PC-3 (cell line): ENCODE measurements at regions of chr4 and their contacts with region 1.

Region 1: GRCh38 chr4:24781999-24782745 is 13.2 kb upstream of the SOD3 start:
- DNase-seq: peak; percentile 72
- ATAC-seq: peak; percentile 82
- H3K4me3 ChIP-seq: no peak overlapping the region
- H3K27ac ChIP-seq: peak overlapping the region; percentile 78
- H3K4me1 ChIP-seq: peaks cover 26% of the 10 kb centered on the region
- H3K27me3 ChIP-seq: no peaks in the 10 kb centered on the region
- CTCF ChIP-seq: no peak

Region 2: DNA sequence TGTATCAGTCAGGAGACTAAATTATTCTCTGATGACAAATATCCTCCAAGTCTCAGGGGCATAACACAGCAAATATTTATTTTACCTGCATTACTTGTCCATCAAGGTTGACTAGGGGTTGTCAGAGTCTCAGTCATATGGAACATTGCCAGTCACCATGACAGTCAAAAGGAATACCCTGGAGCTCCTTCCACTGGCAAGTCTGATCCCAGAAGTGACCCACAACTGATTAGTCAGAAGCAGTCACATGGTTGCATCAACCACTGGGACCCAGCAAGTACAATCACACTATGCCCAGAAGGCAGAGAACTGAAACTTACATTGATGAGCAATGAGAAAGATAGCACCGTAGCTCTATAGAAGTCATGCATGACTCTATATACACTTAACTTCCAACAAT is 28.7 kb before region 1 on chr4:
- CTCF ChIA-PET with region 1: interaction called, 3 read pairs
- POLR2A ChIA-PET with region 1: no interaction called
- intact Hi-C with region 1: loop called (anchors 1 kb)
- DNase-seq: peak; percentile 98
- ATAC-seq: peak; percentile 90
- H3K4me3 ChIP-seq: no peak overlapping the region
- H3K27ac ChIP-seq: peak overlapping the region; percentile 93
- H3K4me1 ChIP-seq: peaks cover 24% of the 10 kb centered on the region
- H3K27me3 ChIP-seq: no peaks in the 10 kb centered on the region
- CTCF ChIP-seq: no peak